ENCODE measurements at regions of chr3 and their contacts with region 1.

Region 1: DNA sequence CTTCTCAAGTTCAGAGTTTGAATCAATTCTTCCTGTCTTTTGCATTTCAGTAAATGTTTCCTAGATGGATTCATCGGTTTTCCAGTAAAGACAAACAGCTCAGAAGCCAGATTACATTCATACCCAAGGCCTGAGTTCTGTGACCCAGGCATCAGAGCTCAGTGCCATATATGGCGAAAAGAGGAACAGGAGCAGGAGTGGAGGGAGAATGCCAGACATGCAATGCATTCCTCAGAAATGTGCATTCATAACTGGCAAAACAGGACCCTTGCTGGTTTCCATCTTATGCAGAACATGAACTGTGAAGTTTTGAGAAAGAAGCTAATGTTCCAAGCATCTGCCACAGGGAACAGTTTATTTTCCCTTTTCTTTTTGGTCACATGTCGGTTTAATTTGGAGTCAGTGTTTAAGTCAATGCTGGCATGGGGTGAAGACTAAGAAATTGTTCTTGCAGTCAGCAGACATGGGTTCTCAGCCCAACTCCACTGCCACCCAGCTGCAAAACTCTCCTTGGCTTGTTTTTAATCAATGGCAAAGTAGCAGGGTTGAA is 116.5 kb downstream of the LPP start:
- DNase-seq: peak; percentile 80 to 87
- H3K4me3 ChIP-seq: no peak overlapping the region
- H3K27ac ChIP-seq: no peak overlapping the region
- H3K4me1 ChIP-seq: peaks cover 43% of the 10 kb centered on the region
- H3K27me3 ChIP-seq: no peaks in the 10 kb centered on the region
- CTCF ChIP-seq: no peak

Region 2: GRCh38 chr3:187974871-187975271 is 295.6 kb before region 1 on chr3:
- CTCF ChIA-PET with region 1: no interaction called
- POLR2A ChIA-PET with region 1: interaction called, 4 read pairs
- intact Hi-C with region 1: loop called (anchors 10 kb)
- DNase-seq: no peak
- H3K4me3 ChIP-seq: no peak overlapping the region
- H3K27ac ChIP-seq: peak overlapping the region; percentile 35
- H3K4me1 ChIP-seq: peaks cover 76% of the 10 kb centered on the region
- H3K27me3 ChIP-seq: no peaks in the 10 kb centered on the region
- CTCF ChIP-seq: peak; percentile 42; the same call in 1 of the 2 replicates

Region 3: GRCh38 chr3:188179006-188179966 is 91.2 kb before region 1 on chr3:
- CTCF ChIA-PET with region 1: no interaction called
- POLR2A ChIA-PET with region 1: no interaction called
- intact Hi-C with region 1: loop called (anchors 5 kb)
- DNase-seq: peak in 1 of 2 experiments; percentile 27
- H3K4me3 ChIP-seq: no peak overlapping the region
- H3K27ac ChIP-seq: no peak overlapping the region
- H3K4me1 ChIP-seq: peaks cover 31% of the 10 kb centered on the region
- H3K27me3 ChIP-seq: no peaks in the 10 kb centered on the region
- CTCF ChIP-seq: no peak

Region 4: GRCh38 chr3:188294823-188295487 is 24.5 kb after region 1 on chr3:
- CTCF ChIA-PET with region 1: interaction called, 19 read pairs
- POLR2A ChIA-PET with region 1: interaction called, 13 read pairs
- intact Hi-C with region 1: loop called (anchors 1 kb)
- DNase-seq: peak; percentile 63 to 99
- H3K4me3 ChIP-seq: peak overlapping the region; percentile 8; the same call in 1 of the 2 replicates
- H3K27ac ChIP-seq: peak overlapping the region; percentile 77
- H3K4me1 ChIP-seq: peaks cover 55% of the 10 kb centered on the region
- H3K27me3 ChIP-seq: no peaks in the 10 kb centered on the region
- CTCF ChIP-seq: no peak

Region 5: DNA sequence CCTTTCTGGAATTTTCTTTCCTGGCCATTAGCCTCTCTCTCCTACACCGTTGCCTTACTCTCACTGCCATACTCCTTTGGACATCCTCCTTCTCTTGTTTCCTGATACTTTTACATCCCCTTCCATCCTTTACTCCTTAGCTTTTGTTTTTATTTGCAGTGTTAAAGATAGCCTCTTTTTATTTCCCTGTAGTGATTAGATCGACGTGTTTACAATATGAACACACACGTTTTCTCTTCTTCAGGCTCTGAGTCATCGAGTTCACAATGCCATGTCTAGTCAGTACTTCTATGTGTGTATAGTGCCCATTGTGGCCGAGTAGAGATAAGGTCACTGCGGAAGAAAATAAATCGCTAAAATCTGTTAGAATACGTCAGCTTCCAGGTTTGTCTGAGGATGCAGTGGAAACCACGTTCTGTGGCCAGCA is 91.9 kb after region 1 on chr3:
- CTCF ChIA-PET with region 1: no interaction called
- POLR2A ChIA-PET with region 1: interaction called, 5 read pairs
- intact Hi-C with region 1: loop called (anchors 1 kb)
- DNase-seq: peak; percentile 41 to 87
- H3K4me3 ChIP-seq: no peak overlapping the region
- H3K27ac ChIP-seq: peak overlapping the region; percentile 17; the same call in 1 of the 2 replicates
- H3K4me1 ChIP-seq: peaks cover 9% of the 10 kb centered on the region
- H3K27me3 ChIP-seq: no peaks in the 10 kb centered on the region
- CTCF ChIP-seq: 0 out of 2 replicates have a peak, but pooled peaks have one; percentile 38

Region 6: DNA sequence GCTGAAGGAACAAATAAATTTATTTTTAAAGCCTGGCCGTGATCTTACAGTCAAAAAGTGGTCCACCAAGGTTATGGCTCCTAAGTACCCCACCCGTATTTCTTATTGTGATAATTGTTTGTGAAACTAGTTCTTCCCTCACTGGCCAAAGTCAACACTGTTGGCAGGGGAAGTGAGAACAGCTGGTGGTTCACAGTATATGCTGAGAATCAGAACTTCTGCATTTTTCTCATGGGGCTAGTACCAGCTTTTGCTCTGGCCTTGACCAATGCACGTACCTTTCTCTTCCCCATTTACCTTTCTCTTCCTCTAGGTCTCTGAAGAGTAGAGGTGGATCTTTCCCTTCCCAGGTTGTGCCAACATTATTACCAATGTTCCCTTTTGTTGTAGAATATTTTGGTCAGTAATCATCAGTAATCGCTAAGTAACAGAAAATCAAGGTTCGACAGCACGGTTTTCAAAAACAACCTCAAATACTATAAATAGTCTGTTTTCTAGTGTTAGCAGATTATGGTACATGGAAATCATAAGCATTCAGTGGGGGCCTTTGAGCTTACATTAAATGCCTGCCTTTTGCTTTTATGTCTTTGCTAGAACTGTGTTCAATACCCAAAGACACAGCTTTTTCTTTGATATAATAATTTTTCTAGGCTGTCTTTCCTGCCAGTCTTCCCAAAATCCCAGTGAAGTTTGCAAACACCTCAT is 151.5 kb after region 1 on chr3:
- CTCF ChIA-PET with region 1: no interaction called
- POLR2A ChIA-PET with region 1: no interaction called
- intact Hi-C with region 1: no loop called
- DNase-seq: no peak
- H3K4me3 ChIP-seq: no peak overlapping the region
- H3K27ac ChIP-seq: no peak overlapping the region
- H3K4me1 ChIP-seq: peaks cover 8% of the 10 kb centered on the region; the same call in 1 of the 2 replicates
- H3K27me3 ChIP-seq: no peaks in the 10 kb centered on the region
- CTCF ChIP-seq: no peak

Region 7: GRCh38 chr3:188947401-188948280 is 677.1 kb after region 1 on chr3:
- CTCF ChIA-PET with region 1: no interaction called
- POLR2A ChIA-PET with region 1: no interaction called
- intact Hi-C with region 1: loop called (anchors 2 kb)
- DNase-seq: peak; percentile 88 to 95
- H3K4me3 ChIP-seq: peak overlapping the region; percentile 57
- H3K27ac ChIP-seq: peak overlapping the region; percentile 7; the same call in 1 of the 2 replicates
- H3K4me1 ChIP-seq: peaks cover 39% of the 10 kb centered on the region
- H3K27me3 ChIP-seq: no peaks in the 10 kb centered on the region
- CTCF ChIP-seq: peak; percentile 66